Cardiac septum (tissue), 1 donor: ENCODE measurements at regions of chr10 and their contacts with region 1.

Region 1: DNA sequence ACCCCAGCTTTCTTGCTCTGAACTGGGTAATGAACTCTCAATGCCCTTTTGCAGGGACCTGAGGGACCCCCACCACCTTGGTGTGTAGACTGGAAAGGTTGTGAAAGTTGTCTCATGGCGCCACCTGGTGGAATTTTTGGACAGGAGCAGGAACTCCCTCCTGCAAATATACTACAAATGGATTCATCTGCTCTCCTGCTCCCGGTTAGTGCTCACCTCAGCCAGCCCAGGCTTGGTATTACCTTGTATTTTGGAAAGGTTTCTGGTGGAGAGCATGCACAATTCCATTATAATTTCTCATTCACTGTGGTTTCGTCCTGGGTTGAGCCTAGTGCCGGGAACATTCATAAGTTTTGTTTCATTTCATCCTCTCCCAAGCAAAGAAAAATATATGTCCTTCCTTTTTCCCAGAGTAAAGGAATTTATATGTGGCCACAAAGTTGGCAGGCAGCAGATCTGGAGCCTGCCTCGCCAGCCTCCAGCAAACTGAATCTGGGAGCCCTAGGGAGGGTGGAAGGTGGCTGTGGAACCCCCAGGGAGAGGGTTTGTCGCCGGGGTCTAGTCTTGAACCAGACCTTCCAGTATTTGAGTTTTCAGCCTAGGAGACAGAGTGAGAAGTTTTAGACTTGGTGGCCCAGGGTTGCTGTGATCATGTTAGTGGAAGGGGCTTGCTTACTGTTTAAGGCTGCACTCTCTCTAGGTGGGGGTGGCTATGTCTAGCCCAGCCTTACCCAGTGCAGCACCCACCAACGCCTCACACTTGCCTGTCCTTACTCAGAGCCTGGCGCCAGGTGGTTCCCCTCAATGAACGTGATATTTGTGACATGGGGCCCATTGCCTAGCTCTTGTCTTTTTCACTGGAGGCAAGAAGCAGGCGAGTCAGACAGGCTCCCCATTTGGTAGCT is 9.5 kb downstream of the FAM241B start:
- DNase-seq: peak; percentile 76

Region 2: DNA sequence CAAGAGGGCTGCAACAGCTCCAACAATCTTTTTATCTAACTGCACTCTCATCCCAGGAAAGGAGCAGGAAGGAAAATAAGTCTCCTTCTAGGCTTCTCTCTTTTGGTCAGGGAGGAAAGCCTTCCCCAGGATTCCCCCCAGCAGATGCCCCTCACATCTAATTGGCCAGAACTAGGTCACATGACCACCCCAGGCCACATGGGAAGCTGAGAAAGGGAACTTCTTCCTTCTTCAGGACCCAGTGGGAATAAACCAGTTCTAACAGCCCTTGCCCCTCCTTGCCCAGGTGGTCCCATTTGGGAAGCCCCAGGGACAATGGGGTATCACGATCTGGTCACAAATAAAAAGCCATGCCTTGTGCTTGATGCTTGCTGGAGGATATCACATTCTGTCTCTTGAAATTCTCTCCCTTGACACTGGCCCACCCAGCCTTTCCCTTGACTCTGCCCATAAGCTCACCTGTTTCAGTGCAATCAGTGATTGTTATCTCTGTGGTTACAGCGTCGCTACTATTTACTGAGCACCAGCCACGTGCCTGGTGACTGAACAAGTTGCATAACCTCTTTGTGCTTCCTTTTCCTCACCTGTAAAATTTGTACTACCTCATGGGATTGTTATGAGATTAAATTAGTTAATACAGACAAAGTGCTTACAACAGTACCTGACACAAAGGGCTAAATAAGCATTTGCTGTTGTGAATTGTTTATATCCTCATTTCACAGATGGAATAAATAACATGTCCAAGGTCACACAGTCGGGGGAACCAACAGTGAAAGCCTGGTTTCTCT is 213.8 kb before region 1 on chr10:
- intact Hi-C with region 1: loop called (anchors 5 kb)
- DNase-seq: no peak

Region 3: DNA sequence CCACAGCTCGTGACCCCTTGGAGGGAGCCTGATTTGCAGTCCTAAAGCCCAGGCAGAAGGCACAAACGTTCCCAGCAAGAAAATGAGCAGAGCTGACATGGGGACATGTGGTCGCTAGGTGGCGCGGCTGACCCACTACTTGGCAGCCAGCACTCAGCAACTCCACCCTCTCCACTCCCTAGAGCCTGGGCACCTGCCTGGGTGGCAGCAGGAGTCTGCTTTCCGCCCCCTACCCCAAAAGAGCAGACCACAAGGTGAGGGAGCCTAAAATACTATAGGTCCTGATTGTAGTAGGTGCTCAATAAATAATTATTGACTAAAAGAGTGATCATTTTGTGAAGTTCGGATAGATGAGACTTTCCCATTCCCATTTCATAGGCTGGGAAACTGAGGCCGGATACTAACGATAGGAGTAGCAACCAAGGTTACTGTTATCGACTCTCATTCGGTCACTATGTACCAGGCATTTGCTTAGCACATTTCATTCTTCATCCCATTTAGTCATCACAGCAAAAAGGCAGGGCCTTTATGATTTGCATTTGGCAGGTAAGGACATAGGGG is 123.8 kb before region 1 on chr10:
- intact Hi-C with region 1: loop called (anchors 1 kb)
- DNase-seq: no peak